ENCODE measurements at regions of chr15 and their contacts with region 1.

Region 1: DNA sequence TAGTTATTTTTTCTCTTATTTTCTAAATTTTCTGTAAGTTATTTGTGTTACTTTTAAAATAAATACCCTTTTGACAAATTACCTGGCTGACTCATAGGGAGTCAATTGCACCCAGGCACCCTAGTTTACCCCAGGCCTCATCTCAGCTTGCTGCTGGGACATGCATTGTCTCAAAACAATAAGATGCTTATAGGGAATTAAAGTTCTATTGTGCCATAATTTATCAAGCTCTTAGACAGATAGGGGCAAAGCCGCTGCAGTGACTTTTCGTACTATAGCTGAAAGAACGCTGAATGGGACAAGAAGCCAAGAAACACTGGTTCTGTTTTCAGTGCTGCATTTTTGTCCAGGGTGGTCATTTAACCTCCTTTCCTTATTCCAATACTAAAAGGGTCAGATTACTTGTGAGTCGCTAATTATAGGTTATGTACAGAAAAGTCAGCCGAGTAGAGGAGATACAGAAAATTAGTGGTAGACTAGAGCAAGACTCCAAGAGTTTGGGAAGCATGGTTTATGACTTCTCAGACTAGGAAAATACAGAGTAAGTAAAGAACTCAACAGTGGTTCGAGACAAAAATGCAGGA is 50.3 kb downstream of the EXD1 start:
- DNase-seq: no peak
- H3K4me3 Mint-ChIP-seq: no peak overlapping the region
- H3K27ac Mint-ChIP-seq: no peak overlapping the region
- H3K4me1 Mint-ChIP-seq: no peaks in the 10 kb centered on the region
- H3K27me3 Mint-ChIP-seq: no peaks in the 10 kb centered on the region
- CTCF ChIP-seq: no peak

Region 2: GRCh38 chr15:40906091-40906990 is 274.0 kb before region 1 on chr15:
- CTCF ChIA-PET with region 1: no interaction called
- intact Hi-C with region 1: loop called (anchors 2 kb)
- DNase-seq: peak; percentile 88
- H3K4me3 Mint-ChIP-seq: no peak overlapping the region
- H3K27ac Mint-ChIP-seq: peak overlapping the region; percentile 20
- H3K4me1 Mint-ChIP-seq: no peaks in the 10 kb centered on the region
- H3K27me3 Mint-ChIP-seq: no peaks in the 10 kb centered on the region
- CTCF ChIP-seq: peak; percentile 54

Region 3: GRCh38 chr15:40941528-40942336 is 238.6 kb before region 1 on chr15:
- CTCF ChIA-PET with region 1: no interaction called
- intact Hi-C with region 1: loop called (anchors 10 kb)
- DNase-seq: peak; percentile 71
- H3K4me3 Mint-ChIP-seq: peak overlapping the region; percentile 56
- H3K27ac Mint-ChIP-seq: no peak overlapping the region
- H3K4me1 Mint-ChIP-seq: no peaks in the 10 kb centered on the region
- H3K27me3 Mint-ChIP-seq: no peaks in the 10 kb centered on the region
- CTCF ChIP-seq: no peak

Region 4: DNA sequence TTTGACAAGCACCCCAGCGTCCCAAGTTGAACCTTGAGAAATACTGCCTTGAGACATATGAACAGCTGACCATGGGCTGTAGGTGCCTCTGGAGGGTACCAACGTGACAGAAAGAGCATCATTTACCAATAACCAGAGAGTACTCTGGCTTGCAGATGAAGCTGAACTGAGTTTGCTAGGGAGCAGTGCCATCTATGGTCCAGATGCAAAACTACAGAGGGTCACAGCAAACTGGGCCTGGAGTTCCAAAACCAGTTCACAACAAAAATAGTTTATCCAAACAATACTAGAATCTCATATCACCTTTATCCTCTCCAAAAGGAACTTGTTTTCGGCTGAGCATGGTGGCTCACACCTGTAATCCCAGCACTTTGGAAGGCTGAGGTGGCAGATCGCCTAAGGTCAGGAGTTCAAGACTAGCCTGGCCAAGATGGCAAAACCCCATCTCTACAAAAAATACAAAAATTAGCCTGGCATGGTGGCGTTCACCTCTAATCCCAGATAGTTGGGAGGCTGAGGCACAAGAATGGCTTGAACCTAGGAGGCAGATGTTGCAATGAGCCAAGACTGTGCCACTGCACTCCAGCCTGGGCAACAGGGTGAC is 157.7 kb before region 1 on chr15:
- CTCF ChIA-PET with region 1: no interaction called
- intact Hi-C with region 1: loop called (anchors 10 kb)
- DNase-seq: peak; percentile 26
- H3K4me3 Mint-ChIP-seq: no peak overlapping the region
- H3K27ac Mint-ChIP-seq: no peak overlapping the region
- H3K4me1 Mint-ChIP-seq: no peaks in the 10 kb centered on the region
- H3K27me3 Mint-ChIP-seq: no peaks in the 10 kb centered on the region
- CTCF ChIP-seq: no peak

Region 5: DNA sequence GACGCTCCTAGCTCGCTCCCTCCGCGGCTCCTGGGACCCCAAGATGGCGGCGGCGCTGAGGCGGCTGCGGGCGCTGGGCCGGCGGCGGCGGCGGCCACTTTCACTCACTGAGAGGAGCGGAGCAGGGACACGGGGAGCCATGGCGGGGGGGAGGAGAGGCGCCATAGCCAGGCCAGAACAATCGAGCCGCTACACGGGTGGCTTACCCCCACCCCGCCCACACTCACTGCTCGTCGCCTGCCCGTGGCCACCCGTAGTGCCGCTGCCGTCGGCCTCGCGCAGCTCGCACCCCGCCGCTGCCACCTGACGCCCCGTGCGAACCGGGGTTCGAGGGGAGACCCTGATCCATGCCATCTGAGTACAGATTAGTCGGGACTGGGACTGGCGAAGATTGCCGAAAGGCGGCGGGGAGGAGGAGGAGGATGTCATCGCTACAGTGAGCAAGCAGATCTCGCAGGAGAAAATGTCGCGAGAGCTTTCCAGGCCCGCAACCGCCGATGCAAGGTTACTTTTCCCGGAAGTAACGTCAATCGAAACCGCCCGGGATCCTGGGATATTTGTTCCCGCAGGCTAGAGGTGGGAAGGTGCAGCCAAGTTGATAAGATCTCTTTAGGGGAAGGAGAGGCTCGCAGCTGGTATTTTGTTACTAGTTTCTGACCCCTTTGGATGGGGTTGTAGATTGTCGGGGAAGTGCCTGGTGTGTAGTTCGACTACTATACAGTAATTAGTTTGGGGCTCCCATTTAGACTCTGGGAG is 64.0 kb before region 1 on chr15 and contains the start of gene INO80:
- CTCF ChIA-PET with region 1: no interaction called
- intact Hi-C with region 1: loop called (anchors 10 kb)
- DNase-seq: peak; percentile 91
- H3K4me3 Mint-ChIP-seq: peak within 1 kb of the TSS; percentile 91
- H3K27ac Mint-ChIP-seq: peak within 1 kb of the TSS; percentile 99
- H3K4me1 Mint-ChIP-seq: no peaks in the 10 kb centered on the region
- H3K27me3 Mint-ChIP-seq: no peaks in the 10 kb centered on the region
- CTCF ChIP-seq: no peak
- total RNA-seq, gene INO80: 15.3 and 16.9 TPM in 2 replicates

Region 6: DNA sequence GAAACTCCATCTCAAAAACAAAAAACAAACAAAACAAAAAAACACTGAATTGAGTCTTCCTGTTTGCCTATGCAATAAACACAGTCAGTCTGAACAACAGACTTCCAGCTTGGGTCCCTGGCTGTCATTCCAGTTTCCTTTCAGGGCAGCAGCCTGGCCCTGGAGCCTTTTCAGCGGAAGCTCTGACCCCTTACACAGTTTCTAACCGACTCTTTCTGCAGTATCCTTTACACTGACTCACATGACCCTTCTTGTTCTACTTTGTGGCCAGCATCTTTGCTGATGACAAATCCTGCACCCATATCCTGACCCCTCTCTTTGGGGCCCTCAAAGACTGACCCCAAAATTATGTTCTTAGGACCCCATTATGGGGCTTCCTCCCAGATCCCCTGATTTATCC is 25.9 kb before region 1 on chr15:
- CTCF ChIA-PET with region 1: no interaction called
- intact Hi-C with region 1: no loop called
- DNase-seq: no peak
- H3K4me3 Mint-ChIP-seq: no peak overlapping the region
- H3K27ac Mint-ChIP-seq: no peak overlapping the region
- H3K4me1 Mint-ChIP-seq: no peaks in the 10 kb centered on the region
- H3K27me3 Mint-ChIP-seq: no peaks in the 10 kb centered on the region
- CTCF ChIP-seq: no peak

Region 7: DNA sequence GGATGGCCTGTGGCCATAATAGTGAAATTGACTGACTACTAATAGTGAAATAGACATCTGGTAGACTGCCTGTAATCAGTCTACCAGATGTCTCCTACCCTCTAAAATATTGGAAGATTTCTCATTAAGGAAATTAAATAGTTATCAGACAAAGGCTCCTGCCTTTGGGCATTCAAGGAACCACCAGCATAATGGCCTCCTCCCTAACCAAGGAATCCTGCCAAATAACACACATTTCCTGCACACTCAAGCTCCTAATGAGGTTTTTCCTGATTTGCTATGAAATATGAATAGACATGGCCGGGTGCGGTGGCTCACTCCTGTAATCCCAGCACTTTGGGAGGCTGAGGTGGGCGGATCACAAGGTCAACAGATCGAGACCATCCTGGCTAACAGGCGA is 166.9 kb after region 1 on chr15:
- CTCF ChIA-PET with region 1: no interaction called
- intact Hi-C with region 1: no loop called
- DNase-seq: no peak
- H3K4me3 Mint-ChIP-seq: no peak overlapping the region
- H3K27ac Mint-ChIP-seq: no peak overlapping the region
- H3K4me1 Mint-ChIP-seq: no peaks in the 10 kb centered on the region
- H3K27me3 Mint-ChIP-seq: no peaks in the 10 kb centered on the region
- CTCF ChIP-seq: no peak